Caco-2 (cell line): ENCODE measurements at regions of chr16 and their contacts with region 1.

Region 1: DNA sequence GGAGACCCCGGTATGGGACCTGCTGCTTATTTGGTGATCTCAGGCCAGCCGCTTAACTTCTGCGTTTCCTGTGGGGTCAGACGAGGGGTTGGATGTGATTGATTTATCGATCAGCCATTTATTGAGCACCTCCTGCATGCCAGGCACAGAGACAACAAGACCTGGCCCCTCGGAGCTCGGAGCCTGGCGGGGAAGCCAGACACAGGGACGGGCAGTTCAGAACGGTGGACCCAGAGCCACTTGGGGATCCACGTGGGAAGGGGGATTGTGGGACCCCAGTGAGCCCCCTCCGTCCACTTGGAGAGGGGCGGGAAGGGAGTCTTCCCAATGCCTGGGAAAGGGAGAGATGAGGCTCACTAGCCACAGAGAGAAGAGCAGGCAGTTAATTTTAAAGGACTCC is 84.7 kb upstream of the CIBAR2 start:
- DNase-seq: no peak
- H3K4me3 ChIP-seq: no peak overlapping the region
- H3K4me3 Mint-ChIP-seq: no peak overlapping the region
- H3K27ac Mint-ChIP-seq: no peak overlapping the region
- H3K4me1 ChIP-seq: peaks cover 36% of the 10 kb centered on the region
- H3K4me1 Mint-ChIP-seq: peaks cover 22% of the 10 kb centered on the region
- H3K27me3 ChIP-seq: no peaks in the 10 kb centered on the region
- H3K27me3 Mint-ChIP-seq: no peaks in the 10 kb centered on the region
- CTCF ChIP-seq: no peak

Region 2: DNA sequence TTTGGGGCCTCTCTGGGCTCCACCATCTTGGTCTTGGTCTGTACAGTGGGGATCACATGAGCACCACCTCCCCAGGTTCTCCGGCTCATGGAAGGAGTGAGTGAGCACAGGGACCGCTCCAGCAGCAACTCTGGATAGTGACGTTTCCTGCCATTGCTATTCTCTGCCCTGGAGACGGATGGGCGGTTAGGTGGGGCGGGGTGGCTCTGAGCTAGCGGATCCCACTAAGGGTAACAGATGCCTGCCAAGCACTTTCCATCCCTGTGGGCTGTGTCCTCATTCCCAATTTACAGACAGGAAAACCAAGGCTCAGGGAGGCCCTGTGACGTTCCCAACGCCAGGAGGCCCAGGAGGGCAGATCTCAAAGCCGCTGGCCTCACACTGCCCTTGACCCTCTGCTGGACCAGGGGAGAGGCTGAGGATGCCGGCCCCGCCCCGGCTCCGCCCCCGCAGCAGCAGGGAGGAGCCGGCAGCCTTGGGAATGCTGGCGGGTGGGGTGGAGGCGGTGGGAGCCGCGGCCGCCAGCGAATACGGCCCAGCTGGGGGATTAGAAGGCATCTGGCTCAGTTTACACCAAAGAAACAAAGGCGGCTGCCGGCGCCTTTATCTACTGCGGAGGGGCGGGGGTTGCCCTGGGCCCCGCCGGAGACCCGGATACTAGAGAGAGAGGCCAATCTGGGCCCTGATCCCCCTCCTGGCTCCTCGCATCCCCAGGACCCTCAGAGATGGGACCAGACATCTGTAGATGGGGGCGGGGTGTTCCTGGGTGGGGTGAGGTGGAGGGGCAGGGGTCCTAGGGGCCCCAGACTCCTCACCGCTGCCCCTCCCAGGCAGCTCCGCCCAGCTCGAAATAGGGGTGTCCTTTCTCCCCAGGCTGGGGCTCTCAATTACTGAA is 37.6 kb after region 1 on chr16:
- CTCF ChIA-PET with region 1: no interaction called
- POLR2A ChIA-PET with region 1: no interaction called
- intact Hi-C with region 1: no loop called
- DNase-seq: peak in 1 of 2 experiments; percentile 39
- H3K4me3 ChIP-seq: no peak overlapping the region
- H3K4me3 Mint-ChIP-seq: peak overlapping the region; percentile 17
- H3K27ac Mint-ChIP-seq: no peak overlapping the region
- H3K4me1 ChIP-seq: 0 out of 2 replicates have a peak, but pooled peaks cover 4% of the 10 kb centered on the region
- H3K4me1 Mint-ChIP-seq: no peaks in the 10 kb centered on the region
- H3K27me3 ChIP-seq: no peaks in the 10 kb centered on the region
- H3K27me3 Mint-ChIP-seq: no peaks in the 10 kb centered on the region
- CTCF ChIP-seq: no peak

Region 3: DNA sequence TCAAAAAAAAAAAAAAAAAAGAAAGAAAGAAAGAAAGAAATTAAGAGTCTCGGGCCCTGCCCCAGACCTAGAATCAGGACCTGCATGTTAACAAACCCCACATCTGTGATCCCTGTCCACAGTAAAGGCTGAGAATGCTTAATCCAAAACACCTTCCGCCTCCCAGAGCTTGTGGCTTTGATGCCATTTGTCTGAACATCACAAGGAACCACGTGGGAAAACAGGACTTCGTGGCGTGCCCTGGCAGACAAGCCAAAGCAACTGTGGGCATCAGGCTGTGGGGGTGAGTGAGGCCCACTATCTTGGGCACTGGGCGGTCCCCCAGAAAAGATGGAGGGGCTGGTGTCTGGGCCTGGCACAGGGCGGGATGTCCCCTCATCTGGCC is 88.7 kb after region 1 on chr16:
- CTCF ChIA-PET with region 1: interaction called, 10 read pairs
- POLR2A ChIA-PET with region 1: no interaction called
- intact Hi-C with region 1: no loop called
- DNase-seq: no peak
- H3K4me3 ChIP-seq: no peak overlapping the region
- H3K4me3 Mint-ChIP-seq: no peak overlapping the region
- H3K27ac Mint-ChIP-seq: no peak overlapping the region
- H3K4me1 ChIP-seq: no peaks in the 10 kb centered on the region
- H3K4me1 Mint-ChIP-seq: no peaks in the 10 kb centered on the region
- H3K27me3 ChIP-seq: no peaks in the 10 kb centered on the region
- H3K27me3 Mint-ChIP-seq: no peaks in the 10 kb centered on the region
- CTCF ChIP-seq: no peak